ENCODE measurements at regions of chr12 and their contacts with region 1.

Region 1: GRCh38 chr12:32755654-32756475 is at the start of gene YARS2:
- DNase-seq: peak; percentile 62 to 86 (median 83)
- ATAC-seq: peak; percentile 92
- H3K4me3 ChIP-seq: peak within 1 kb of the TSS; percentile 68
- H3K4me3 Mint-ChIP-seq: peak within 1 kb of the TSS; percentile 84 to 99 (median 90)
- H3K27ac ChIP-seq: peak within 1 kb of the TSS; percentile 76
- H3K27ac Mint-ChIP-seq: peak within 1 kb of the TSS; percentile 81 to 99 (median 94)
- H3K4me1 ChIP-seq: peaks cover 13% of the 10 kb centered on the region in 2 donors
- H3K4me1 Mint-ChIP-seq: peaks cover 0 to 21% (median 20%) of the 10 kb centered on the region in 7 donors
- H3K27me3 ChIP-seq: no peaks in the 10 kb centered on the region
- H3K27me3 Mint-ChIP-seq: peaks cover 0 to 4% (median 0%) of the 10 kb centered on the region in 5 donors
- total RNA-seq, gene YARS2: 11.3 to 24.0 (median 17.9) TPM

Region 2: DNA sequence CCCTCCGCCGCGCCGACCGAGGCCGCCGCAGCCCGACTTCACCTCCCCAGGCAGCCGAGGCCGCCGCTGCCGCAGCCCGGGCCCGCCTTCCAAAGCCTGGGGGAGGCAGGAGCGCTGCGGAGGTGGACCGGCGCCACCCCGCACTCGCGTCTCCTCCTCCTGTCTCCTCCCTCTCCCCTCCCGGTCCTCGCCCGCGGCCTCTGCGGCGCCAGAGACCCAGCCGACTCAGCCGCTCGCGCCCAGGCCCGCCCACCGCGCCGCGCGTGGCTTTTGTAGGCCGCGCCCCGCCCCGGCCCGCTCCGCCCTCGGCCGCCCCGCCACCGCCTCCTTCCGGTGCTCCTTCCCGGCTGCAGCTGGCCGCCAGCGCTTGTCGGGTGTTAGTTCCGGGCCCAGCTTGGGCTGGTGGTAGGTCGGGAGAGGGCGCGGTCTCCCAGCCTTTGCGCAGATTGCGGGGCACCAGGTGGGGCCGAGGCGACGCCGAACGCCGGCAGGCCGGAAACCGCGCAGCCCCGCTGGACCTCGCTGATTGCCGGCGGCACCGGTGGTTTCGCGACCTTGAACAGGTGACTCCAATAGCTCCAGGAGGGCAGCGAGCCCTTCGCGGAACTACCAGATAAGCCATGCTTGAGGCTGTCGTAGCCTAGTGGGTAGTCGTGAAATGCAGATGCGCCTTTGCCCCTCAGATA is 2001.0 kb before region 1 on chr12 and contains the start of gene CAPRIN2:
- CTCF ChIA-PET with region 1: no interaction called
- POLR2A ChIA-PET with region 1: no interaction called
- intact Hi-C with region 1: loop called (anchors 2 to 10 kb)
- DNase-seq: peak; percentile 89 to 97 (median 92)
- ATAC-seq: peak; percentile 96
- H3K4me3 ChIP-seq: peak within 1 kb of the TSS; percentile 67
- H3K4me3 Mint-ChIP-seq: peak within 1 kb of the TSS; percentile 93 to 99 (median 96)
- H3K27ac ChIP-seq: peak within 1 kb of the TSS; percentile 63
- H3K27ac Mint-ChIP-seq: peak within 1 kb of the TSS; percentile 80 to 93 (median 90)
- H3K4me1 ChIP-seq: peaks cover 13 to 29% of the 10 kb centered on the region in 2 donors
- H3K4me1 Mint-ChIP-seq: peaks cover 22 to 53% (median 46%) of the 10 kb centered on the region in 7 donors
- H3K27me3 ChIP-seq: no peaks in the 10 kb centered on the region
- H3K27me3 Mint-ChIP-seq: no peaks in the 10 kb centered on the region
- total RNA-seq, gene CAPRIN2: 13.7 to 50.1 (median 28.9) TPM

Region 3: DNA sequence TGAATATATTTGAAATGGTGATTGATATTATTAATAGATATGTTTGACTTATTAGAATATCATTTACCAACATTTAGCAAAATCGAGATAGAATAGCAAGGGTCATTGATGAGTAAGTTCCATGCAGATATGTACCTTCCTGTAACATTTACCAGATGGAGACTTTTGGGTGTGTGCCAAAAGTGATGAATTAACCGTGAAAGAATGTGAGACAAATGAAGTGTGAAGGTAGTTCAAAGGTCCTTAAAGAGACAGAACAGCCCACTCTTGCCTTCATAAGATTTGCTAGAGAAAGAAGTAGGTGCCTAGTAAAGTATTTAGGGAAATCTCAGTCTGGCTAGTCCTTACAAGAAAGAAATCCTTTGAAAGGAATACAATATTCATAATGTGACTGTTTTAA is 311.0 kb before region 1 on chr12:
- CTCF ChIA-PET with region 1: no interaction called
- POLR2A ChIA-PET with region 1: no interaction called
- intact Hi-C with region 1: no loop called
- DNase-seq: no peak
- ATAC-seq: no peak
- H3K4me3 ChIP-seq: no peak overlapping the region
- H3K4me3 Mint-ChIP-seq: no peak overlapping the region
- H3K27ac ChIP-seq: no peak overlapping the region
- H3K27ac Mint-ChIP-seq: no peak overlapping the region
- H3K4me1 ChIP-seq: no peaks in the 10 kb centered on the region
- H3K4me1 Mint-ChIP-seq: peaks cover 0 to 8% (median 0%) of the 10 kb centered on the region in 7 donors
- H3K27me3 ChIP-seq: no peaks in the 10 kb centered on the region
- H3K27me3 Mint-ChIP-seq: peaks cover 0 to 4% (median 0%) of the 10 kb centered on the region in 5 donors

Region 4: DNA sequence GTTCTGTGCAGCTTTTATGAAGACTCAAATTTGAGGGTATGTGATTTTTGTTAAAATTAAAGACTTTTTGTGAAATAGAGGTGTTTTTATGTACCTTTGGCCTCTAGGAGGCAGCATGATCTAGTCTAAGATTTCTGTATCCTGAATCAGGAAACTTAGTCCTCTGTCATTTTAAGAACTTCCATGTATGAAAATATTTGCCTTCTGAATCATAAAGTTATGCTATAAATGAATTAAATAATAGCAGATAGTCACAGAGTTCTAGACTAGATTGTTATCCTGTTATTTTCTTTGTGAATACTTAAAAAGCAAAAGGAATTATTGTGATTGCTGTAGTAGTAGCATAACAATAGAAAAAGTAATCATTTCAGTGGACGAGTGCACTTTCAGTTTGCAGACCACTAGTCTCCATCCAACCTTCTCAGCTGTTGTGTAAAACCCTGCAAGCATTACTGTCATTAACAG is 300.2 kb before region 1 on chr12:
- CTCF ChIA-PET with region 1: no interaction called
- POLR2A ChIA-PET with region 1: interaction called, 4 read pairs
- intact Hi-C with region 1: loop called (anchors 1 kb)
- DNase-seq: peak in 6 of 9 donors; percentile 4 to 45 (median 32)
- ATAC-seq: peak; percentile 63
- H3K4me3 ChIP-seq: no peak overlapping the region
- H3K4me3 Mint-ChIP-seq: peak overlapping the region in 5 of 10 donors; percentile 16 to 55 (median 36)
- H3K27ac ChIP-seq: no peak overlapping the region
- H3K27ac Mint-ChIP-seq: no peak overlapping the region
- H3K4me1 ChIP-seq: no peaks in the 10 kb centered on the region
- H3K4me1 Mint-ChIP-seq: peaks cover 0 to 4% (median 0%) of the 10 kb centered on the region in 7 donors
- H3K27me3 ChIP-seq: no peaks in the 10 kb centered on the region
- H3K27me3 Mint-ChIP-seq: peaks cover 0 to 10% (median 0%) of the 10 kb centered on the region in 5 donors

Region 5: DNA sequence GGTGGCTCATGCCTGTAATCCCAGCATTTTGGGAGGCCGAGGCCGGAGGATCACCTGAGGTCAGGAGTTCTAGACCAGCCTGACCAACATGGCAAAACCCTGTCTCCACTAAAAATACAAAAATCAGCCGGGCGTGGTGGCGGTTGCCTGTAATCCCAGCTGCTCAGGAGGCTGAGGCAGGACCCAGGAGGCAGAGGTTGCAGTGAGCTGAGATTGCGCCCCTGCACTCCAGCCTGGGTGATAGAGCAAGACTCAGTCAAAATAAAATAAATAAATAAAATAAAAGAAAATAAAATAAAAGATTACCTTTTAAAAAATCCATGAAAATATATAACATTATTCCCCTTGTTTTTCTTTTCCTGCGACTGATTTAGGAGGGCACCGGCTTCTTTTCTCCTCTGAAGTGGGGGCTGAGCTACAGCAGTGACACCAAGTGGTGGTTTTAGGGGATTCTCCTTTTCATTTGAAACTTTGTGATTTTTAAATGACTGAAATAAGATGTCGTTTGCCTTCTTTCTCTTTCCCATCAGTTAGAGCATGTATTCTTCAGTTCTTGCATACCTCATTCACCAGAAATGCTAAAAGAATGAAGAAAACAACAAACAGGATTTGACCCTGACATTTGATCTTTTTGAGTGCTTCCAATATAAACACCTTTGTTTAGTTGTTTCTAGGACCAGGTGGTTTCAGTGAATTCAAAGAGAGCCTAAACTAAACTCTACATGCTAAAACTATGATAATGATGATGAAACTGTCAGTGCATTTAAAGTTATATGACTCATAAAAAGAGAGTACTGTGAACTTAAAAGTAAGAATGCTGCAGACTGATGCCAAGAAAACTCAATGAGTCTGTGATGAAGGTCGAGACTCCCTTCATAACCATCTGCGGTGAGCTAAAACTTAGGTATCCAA is 163.3 kb after region 1 on chr12:
- CTCF ChIA-PET with region 1: interaction called, 3 read pairs
- POLR2A ChIA-PET with region 1: no interaction called
- intact Hi-C with region 1: loop called (anchors 1 kb)
- DNase-seq: no peak
- ATAC-seq: no peak
- H3K4me3 ChIP-seq: no peak overlapping the region
- H3K4me3 Mint-ChIP-seq: no peak overlapping the region
- H3K27ac ChIP-seq: no peak overlapping the region
- H3K27ac Mint-ChIP-seq: no peak overlapping the region
- H3K4me1 ChIP-seq: no peaks in the 10 kb centered on the region
- H3K4me1 Mint-ChIP-seq: no peaks in the 10 kb centered on the region
- H3K27me3 ChIP-seq: no peaks in the 10 kb centered on the region
- H3K27me3 Mint-ChIP-seq: peaks cover 2 to 11% (median 10%) of the 10 kb centered on the region in 5 donors

Region 6: DNA sequence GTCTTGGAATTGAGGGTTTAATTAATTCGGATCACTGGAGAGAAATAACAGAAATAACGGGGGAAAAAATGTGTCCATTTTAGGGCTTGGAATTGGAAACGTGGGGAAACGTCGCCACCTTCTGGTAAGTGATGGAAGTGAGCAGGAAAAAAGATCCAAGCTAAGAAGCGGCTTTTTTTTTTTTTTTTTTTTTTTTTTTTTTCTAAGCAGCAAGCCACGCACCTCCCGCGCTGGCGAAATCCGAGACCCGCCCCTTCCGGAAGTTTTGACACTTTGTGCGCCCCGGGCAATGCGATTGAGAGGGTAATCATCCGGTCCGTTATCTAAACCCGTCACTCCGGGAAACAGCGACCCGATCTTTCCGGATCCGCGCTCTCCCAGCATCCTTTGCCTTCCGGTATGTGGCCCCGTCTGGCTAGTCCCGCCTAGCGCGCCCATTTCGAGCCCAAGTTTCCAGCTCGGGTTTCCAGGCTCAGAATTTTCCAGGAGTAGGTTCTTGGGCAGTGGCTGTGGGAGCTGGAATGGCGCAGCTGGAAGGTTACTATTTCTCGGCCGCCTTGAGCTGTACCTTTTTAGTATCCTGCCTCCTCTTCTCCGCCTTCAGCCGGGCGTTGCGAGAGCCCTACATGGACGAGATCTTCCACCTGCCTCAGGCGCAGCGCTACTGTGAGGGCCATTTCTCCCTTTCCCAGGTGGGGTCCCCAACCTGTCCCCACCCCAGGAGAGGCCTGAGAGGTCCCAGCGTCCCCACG is 1266.4 kb after region 1 on chr12 and contains the start of gene ALG10:
- CTCF ChIA-PET with region 1: interaction called, 54 read pairs
- POLR2A ChIA-PET with region 1: interaction called, 39 read pairs
- intact Hi-C with region 1: loop called (anchors 1 kb)
- DNase-seq: peak; percentile 88 to 98 (median 96)
- ATAC-seq: peak; percentile 98
- H3K4me3 ChIP-seq: peak within 1 kb of the TSS; percentile 87
- H3K4me3 Mint-ChIP-seq: peak within 1 kb of the TSS; percentile 93 to 99 (median 96)
- H3K27ac ChIP-seq: peak within 1 kb of the TSS; percentile 94
- H3K27ac Mint-ChIP-seq: peak within 1 kb of the TSS; percentile 95 to 99 (median 98)
- H3K4me1 ChIP-seq: peaks cover 4 to 8% of the 10 kb centered on the region in 2 donors
- H3K4me1 Mint-ChIP-seq: peaks cover 6 to 42% (median 30%) of the 10 kb centered on the region in 7 donors
- H3K27me3 ChIP-seq: no peaks in the 10 kb centered on the region
- H3K27me3 Mint-ChIP-seq: no peaks in the 10 kb centered on the region
- total RNA-seq, gene ALG10: 10.2 to 21.6 (median 17.5) TPM

Region 7: DNA sequence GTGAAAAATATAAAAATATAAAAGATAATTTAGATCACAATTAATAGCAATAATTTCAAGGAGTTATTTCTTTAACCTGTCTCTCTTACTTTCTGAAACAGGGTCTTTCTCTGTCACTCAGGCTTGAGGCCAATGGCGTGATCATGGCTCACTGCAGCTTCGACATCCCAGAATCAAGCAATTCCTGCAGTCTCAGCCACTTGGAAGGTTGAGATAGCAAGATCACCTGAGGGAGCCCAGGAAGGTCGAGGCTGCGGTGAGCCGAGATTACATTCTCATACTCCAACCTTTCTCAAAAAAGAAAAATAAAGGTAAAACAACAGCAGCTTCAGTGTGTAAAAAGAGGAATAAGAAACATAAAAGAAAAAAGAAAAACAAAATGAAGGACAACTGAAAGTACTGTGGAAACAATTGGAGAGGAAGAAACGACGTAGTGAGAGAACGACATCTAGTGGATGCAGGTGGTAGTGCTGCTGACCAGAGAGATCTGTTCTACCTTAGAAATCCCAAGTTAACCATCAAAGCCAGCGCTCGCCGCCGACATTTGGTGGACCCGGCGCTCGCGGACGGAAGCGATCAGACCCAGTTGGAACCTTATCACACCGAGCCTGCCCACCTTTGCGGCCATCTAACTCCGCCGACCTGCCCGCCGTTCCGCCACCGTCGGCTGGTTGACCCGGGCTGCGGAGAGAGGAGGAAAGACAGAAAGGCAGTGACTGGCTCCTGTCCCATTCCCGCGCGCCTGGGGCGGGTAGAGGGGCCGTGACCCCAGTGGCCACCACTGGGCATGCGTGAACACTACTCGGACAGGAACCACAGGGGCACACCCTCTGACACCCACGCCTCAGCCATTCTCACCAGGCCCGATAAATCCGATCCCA is 1462.5 kb after region 1 on chr12:
- CTCF ChIA-PET with region 1: no interaction called
- POLR2A ChIA-PET with region 1: no interaction called
- intact Hi-C with region 1: loop called (anchors 1 kb)
- DNase-seq: peak; percentile 14 to 61 (median 50)
- ATAC-seq: peak; percentile 90
- H3K4me3 ChIP-seq: peak overlapping the region; percentile 47
- H3K4me3 Mint-ChIP-seq: peak overlapping the region; percentile 76 to 95 (median 89)
- H3K27ac ChIP-seq: no peak overlapping the region
- H3K27ac Mint-ChIP-seq: peak overlapping the region in 6 of 9 donors; percentile 26 to 79 (median 74)
- H3K4me1 ChIP-seq: no peaks in the 10 kb centered on the region
- H3K4me1 Mint-ChIP-seq: peaks cover 4 to 18% (median 11%) of the 10 kb centered on the region in 7 donors
- H3K27me3 ChIP-seq: peaks cover 0 to 4% of the 10 kb centered on the region in 2 donors
- H3K27me3 Mint-ChIP-seq: peaks cover 2 to 17% (median 11%) of the 10 kb centered on the region in 5 donors

Measured in naive thymus-derived CD4-positive, alpha-beta T cell (primary cell).